Activated naive CD4-positive, alpha-beta T cell treated with anti-CD3 and anti-CD28 coated beads, Interleukin-2, amount 10 ng/mL, durations not matched to agents 7 days and 5 days (primary cell): ENCODE measurements at regions of chr5 and their contacts with region 1.

Region 1: GRCh38 chr5:132466433-132467286 is 23.9 kb downstream of the IRF1 start:
- DNase-seq: peak; percentile 87
- H3K4me3 Mint-ChIP-seq: peak overlapping the region; percentile 50
- H3K27ac Mint-ChIP-seq: peak overlapping the region; percentile 91
- H3K4me1 Mint-ChIP-seq: peaks cover 99% of the 10 kb centered on the region
- H3K27me3 Mint-ChIP-seq: no peaks in the 10 kb centered on the region

Region 2: DNA sequence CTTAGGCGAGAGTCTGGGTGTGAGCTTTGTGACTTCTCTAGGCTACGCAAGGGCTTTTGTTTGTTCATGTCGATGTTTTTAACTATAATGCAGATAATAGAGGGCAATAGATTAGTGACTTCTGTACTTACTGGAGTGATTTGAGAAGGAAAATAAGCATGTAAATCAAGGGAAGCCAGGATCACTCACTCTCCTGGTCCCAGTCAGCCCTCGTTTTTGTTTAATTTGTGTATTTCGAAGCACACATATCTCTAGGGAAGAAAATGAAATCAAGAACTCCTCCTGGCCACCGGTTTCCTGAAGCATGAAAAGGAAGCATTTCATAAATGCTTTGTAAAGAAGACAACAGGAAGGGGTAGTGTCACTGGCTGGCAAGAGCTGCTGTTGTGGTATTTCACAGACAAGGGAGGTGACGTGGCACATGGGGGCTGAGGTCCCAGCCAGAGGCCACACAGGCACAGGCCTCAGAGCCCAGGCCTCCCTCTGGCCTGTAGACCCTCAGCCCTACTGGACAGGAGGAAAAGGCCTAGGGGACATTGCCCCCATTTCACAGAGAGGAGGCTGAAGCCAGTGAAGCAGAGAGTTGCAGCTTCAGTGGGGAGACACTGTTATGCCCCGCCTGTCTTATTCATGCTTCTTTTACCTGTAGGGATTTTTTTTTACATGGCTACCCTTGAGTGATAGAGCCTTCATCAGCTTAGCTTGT is 10.2 kb before region 1 on chr5:
- CTCF ChIA-PET with region 1: interaction called, 24 read pairs
- DNase-seq: peak; percentile 78
- H3K4me3 Mint-ChIP-seq: peak overlapping the region; percentile 63
- H3K27ac Mint-ChIP-seq: peak overlapping the region; percentile 100
- H3K4me1 Mint-ChIP-seq: peaks cover 91% of the 10 kb centered on the region
- H3K27me3 Mint-ChIP-seq: no peaks in the 10 kb centered on the region